SK-N-SH (cell line): ENCODE measurements at regions of chr9 and their contacts with region 1.

Region 1: GRCh38 chr9:131478421-131478868 is 24.3 kb upstream of the POMT1 start:
- DNase-seq: peak; percentile 86
- H3K4me3 ChIP-seq: no peak overlapping the region
- H3K27ac ChIP-seq: no peak overlapping the region
- H3K4me1 ChIP-seq: no peaks in the 10 kb centered on the region; a peak in 1 of 4 replicates
- H3K27me3 ChIP-seq: no peaks in the 10 kb centered on the region
- CTCF ChIP-seq: peak; percentile 71
- EP300 ChIP-seq: no peak
- RAD21 ChIP-seq: peak; percentile 49

Region 2: GRCh38 chr9:131491001-131491710 is 12.7 kb after region 1 on chr9:
- CTCF ChIA-PET with region 1: interaction called, 18 read pairs
- POLR2A ChIA-PET with region 1: no interaction called
- DNase-seq: no peak
- H3K4me3 ChIP-seq: no peak overlapping the region
- H3K27ac ChIP-seq: no peak overlapping the region
- H3K4me1 ChIP-seq: no peaks in the 10 kb centered on the region
- H3K27me3 ChIP-seq: no peaks in the 10 kb centered on the region
- CTCF ChIP-seq: no peak
- EP300 ChIP-seq: no peak
- RAD21 ChIP-seq: no peak

Region 3: GRCh38 chr9:131502781-131503625 is 24.6 kb after region 1 on chr9 and contains the start of gene POMT1:
- CTCF ChIA-PET with region 1: interaction called, 11 read pairs
- POLR2A ChIA-PET with region 1: no interaction called
- DNase-seq: peak; percentile 99
- H3K4me3 ChIP-seq: peak within 1 kb of the TSS; percentile 87 to 99
- H3K27ac ChIP-seq: peak within 1 kb of the TSS; percentile 23 to 82; a peak in 3 of 4 replicates
- H3K4me1 ChIP-seq: peaks cover 3 to 16% of the 10 kb centered on the region in 2 experiments; a peak in 1 of 4 replicates
- H3K27me3 ChIP-seq: no peaks in the 10 kb centered on the region
- CTCF ChIP-seq: no peak
- EP300 ChIP-seq: no peak
- RAD21 ChIP-seq: no peak
- polyA plus RNA-seq, gene POMT1: 34.8 and 44.5 TPM in 2 replicates